A549 (cell line): ENCODE measurements at regions of chr12 and their contacts with region 1.

Region 1: GRCh38 chr12:56359851-56360767 is at the start of gene STAT2:
- DNase-seq: peak; percentile 98 to 100
- ATAC-seq: peak; percentile 98 to 99
- H3K4me3 ChIP-seq: peak within 1 kb of the TSS; percentile 75
- H3K27ac ChIP-seq: peak within 1 kb of the TSS; percentile 76 to 89
- H3K4me1 ChIP-seq: peaks cover 8% of the 10 kb centered on the region
- CTCF ChIP-seq: no peak
- EP300 ChIP-seq: no peak
- POLR2A ChIP-seq: peak; percentile 74
- RAD21 ChIP-seq: peak in 1 of 2 experiments; percentile 1; a peak in 1 of 5 replicates
- polyA plus RNA-seq, gene STAT2: 29.5 and 40.1 TPM in 2 replicates

Region 2: DNA sequence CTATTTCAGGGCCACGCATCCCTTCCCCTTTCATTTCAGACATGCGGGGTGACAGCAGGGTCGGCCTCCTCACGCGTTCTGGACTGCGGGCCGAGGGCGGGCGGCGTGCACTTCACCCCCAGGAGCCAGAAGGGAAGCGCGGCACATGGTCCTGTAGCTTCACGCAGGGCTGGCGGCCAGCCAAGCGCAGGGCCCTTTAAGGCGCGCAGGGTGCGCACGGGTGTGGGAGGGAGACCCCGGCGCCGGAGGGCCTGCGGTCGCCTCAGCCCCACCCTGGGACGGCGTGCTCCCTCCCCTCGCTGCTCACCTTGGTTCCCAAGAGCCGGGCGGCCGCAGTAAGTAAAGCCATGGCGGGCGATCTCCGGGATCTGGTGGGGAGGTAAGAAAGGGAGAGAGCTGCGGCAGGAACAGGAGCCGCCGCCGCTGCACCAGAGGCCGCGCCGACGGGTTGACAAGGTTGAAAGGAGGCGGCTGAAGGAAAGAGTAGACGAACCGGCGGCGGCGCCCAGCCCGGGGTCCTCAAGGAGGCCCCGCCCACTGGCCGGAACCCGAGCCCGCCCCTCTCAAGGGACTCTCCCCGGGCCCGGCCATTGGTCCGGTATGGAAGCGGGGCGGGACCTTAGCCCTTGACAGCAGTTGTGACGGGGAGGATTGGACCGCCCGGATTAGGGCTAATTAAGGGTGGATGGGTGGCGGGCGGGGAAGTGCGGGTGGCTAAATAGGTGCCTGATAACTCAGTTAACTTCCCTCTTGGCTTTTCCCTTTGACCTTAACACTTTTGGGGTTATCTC is 60.1 kb before region 1 on chr12 and contains the start of gene CS:
- CTCF ChIA-PET with region 1: no interaction called
- POLR2A ChIA-PET with region 1: no interaction called
- DNase-seq: peak; percentile 94 to 98
- ATAC-seq: peak; percentile 94 to 97
- H3K4me3 ChIP-seq: peak within 1 kb of the TSS; percentile 69
- H3K27ac ChIP-seq: peak within 1 kb of the TSS; percentile 90 to 91
- H3K4me1 ChIP-seq: peaks cover 23% of the 10 kb centered on the region; the same call in 2 of the 3 replicates
- CTCF ChIP-seq: no peak
- EP300 ChIP-seq: no peak
- POLR2A ChIP-seq: peak; percentile 42
- RAD21 ChIP-seq: no peak
- polyA plus RNA-seq, gene CS: 223 and 263 TPM in 2 replicates

Region 3: DNA sequence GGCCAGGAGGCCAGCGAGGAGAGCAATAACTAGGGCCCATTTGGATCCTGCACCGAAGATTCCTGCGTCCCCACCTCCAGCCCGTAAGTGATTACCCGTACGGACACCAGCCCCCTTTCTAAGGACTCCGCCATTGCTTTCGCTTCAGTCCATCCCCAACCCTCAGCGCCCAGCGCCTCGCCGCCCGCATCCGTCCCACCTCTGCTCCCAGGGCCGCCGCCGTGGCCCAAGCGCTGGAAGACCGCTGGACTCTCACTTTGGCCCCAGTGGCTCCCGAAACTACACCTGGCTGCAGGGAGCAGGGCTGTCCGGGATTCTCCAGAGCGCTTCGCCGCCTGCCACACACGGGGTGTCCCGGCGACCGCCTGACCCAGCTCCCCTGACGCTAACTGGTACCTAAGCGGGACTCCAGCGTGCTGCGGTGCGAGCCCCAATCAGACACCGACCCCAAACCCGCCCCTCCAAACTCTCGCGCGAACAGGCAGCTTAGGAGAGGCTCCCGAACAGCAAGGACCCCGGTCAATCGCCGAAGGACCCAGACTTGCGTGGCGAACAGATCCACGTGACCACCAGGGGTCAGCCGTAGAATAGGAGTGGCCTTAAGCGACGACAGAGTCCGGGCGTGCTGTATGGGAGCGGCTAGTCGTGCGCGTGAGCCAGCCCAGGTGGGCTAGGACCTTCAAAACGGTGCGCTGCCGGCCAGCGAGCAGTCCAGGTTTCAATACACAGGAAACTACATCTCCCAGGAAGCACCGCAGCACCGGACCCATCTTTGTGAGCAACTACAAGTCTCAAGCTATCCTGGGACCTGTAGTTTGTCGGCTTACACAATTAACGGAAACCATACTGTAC is 44.3 kb before region 1 on chr12 and contains the start of gene CNPY2:
- CTCF ChIA-PET with region 1: interaction called, 4 read pairs
- POLR2A ChIA-PET with region 1: interaction called, 20 read pairs
- DNase-seq: peak; percentile 97 to 100
- ATAC-seq: peak; percentile 97
- H3K4me3 ChIP-seq: peak within 1 kb of the TSS; percentile 93
- H3K27ac ChIP-seq: peak within 1 kb of the TSS; percentile 94 to 96
- H3K4me1 ChIP-seq: peaks cover 11% of the 10 kb centered on the region
- CTCF ChIP-seq: no peak
- EP300 ChIP-seq: no peak
- POLR2A ChIP-seq: peak; percentile 88
- RAD21 ChIP-seq: peak; percentile 30 to 54; a peak in 2 of 5 replicates
- polyA plus RNA-seq, gene CNPY2: 218 and 257 TPM in 2 replicates

Region 4: DNA sequence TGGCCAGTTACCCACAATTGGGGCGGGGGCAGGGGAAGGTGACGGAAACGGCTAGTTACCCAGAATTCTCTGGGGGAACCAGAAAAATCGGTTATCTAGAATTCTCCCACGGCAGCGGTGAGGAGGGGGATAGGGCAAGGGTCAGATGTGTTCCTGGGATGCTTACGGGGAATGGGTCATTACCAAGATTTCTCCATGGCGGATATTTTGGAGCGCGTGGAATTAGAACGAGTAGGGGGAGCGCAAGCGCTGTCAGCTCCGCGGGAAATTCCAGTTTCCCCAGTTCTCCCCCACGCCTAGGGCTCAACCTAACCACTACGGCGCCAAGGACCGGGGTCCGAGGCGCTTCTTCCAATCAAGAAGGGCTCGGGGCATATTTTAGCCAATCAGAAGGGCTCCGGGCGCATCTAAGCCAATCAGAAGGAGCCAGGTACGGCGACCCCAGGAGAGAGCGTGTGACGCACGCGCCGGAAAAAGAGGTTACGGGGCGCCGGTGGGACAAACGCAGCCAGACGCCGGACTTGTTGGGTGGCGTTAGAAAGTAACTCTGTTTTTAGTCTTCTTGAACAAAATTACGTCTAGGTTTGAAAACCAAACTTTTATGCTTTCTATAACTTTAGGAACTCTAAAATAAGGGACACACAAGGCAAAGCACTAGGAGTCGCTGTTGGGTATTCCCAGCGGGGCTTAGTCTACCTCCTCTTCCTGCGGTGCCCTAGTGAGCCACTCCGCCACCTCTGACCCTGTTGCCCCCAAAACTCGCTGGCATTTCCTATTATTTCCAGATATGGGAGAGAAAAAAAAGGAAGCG is 26.2 kb before region 1 on chr12 and contains the start of gene PAN2:
- CTCF ChIA-PET with region 1: interaction called, 9 read pairs
- POLR2A ChIA-PET with region 1: interaction called, 21 read pairs
- DNase-seq: peak; percentile 99 to 100
- ATAC-seq: peak; percentile 97 to 100
- H3K4me3 ChIP-seq: peak within 1 kb of the TSS; percentile 54
- H3K27ac ChIP-seq: peak within 1 kb of the TSS; percentile 91 to 92
- H3K4me1 ChIP-seq: peaks cover 15% of the 10 kb centered on the region
- CTCF ChIP-seq: peak; percentile 47
- EP300 ChIP-seq: no peak
- POLR2A ChIP-seq: peak; percentile 61
- RAD21 ChIP-seq: peak; percentile 22 to 25; a peak in 2 of 5 replicates
- polyA plus RNA-seq, gene PAN2: 66.8 and 89.4 TPM in 2 replicates

Region 5: DNA sequence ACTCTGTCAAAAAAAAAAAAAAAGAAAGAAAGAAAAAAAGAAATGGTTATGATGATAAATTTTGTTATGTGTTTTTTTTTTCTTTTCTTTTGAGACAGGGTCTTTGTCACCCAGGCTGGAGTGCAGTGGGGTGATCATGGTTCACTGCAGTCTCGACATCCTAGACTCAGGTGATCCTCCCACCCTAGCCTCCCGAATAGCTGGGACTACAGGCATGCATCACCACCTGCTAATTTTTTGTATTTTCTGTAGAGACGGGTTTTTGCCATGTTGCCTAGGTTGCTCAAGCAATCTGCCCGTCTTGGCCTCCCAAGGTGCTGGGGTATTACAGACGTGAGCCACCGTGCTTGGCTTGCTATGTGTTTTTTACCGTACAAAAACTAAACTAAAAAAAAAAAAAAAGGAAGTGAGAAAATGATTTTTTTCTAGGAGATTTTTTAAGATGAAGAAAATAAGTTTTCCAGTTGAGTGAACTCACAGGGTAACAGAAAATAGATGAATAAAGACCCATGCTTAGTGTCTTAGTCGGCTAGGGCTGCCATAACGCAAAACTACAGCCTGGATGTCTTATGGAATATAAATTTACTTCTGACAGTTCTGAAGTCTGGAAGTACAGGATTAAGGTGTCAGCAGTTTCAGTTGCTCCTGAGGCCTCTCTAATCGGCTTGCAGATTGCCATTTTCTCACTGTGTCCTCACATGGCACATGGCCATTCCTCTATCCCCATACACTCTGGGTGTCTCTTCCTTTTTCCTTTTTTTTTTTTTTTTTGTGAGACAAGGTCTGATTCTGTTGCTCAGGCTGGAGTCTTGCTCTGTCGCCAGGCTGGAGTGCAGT is 15.7 kb after region 1 on chr12:
- CTCF ChIA-PET with region 1: no interaction called
- POLR2A ChIA-PET with region 1: interaction called, 13 read pairs
- DNase-seq: no peak
- ATAC-seq: peak in 1 of 2 experiments; percentile 26; a peak in 2 of 6 replicates
- H3K4me3 ChIP-seq: no peak overlapping the region
- H3K27ac ChIP-seq: no peak overlapping the region
- H3K4me1 ChIP-seq: no peaks in the 10 kb centered on the region
- CTCF ChIP-seq: no peak
- EP300 ChIP-seq: no peak
- POLR2A ChIP-seq: no peak
- RAD21 ChIP-seq: no peak

Region 6: DNA sequence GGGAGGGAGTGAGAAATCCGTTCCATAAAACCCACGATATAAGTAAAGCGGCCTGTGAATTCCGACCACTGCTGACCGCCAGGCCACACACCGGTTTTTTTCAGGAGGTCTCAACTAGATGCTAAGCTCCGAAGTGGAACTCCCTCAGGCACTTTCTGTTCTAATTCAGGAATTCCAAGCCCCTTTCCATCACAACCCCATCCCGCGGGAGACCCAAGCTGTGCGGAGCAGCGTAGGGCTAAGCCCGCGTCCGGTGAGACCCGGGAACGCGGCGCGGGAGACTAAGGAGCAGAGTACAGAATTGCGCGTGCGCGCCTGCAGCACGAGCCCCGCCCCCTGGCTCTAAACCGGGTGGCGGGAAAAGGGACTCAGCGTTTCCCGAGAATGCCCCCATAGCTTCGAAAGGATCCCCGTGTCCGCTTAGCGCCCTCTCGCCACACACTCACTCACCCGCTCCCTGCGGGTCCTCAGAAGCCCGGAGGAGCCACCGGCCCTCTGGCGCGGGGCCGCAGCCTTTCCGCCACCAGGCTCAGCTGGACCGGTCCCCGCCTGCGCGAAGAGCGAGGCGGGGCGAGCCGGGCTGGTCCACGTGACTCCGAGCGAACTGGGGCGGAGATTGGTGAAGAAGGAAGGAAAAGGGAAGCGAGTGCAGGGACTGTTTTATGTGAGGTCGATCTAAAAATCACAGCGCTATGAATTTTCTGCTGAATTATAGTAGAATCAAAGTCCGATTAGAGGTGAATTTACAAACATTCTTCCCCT is 88.9 kb after region 1 on chr12 and contains the start of gene TIMELESS:
- CTCF ChIA-PET with region 1: interaction called, 3 read pairs
- POLR2A ChIA-PET with region 1: interaction called, 14 read pairs
- DNase-seq: peak; percentile 93 to 99
- ATAC-seq: peak; percentile 97 to 98
- H3K4me3 ChIP-seq: peak within 1 kb of the TSS; percentile 59
- H3K27ac ChIP-seq: peak within 1 kb of the TSS; percentile 84 to 92
- H3K4me1 ChIP-seq: peaks cover 9% of the 10 kb centered on the region
- CTCF ChIP-seq: no peak
- EP300 ChIP-seq: no peak
- POLR2A ChIP-seq: peak; percentile 87
- RAD21 ChIP-seq: no peak
- polyA plus RNA-seq, gene TIMELESS: 17.6 and 34.3 TPM in 2 replicates

Region 7: GRCh38 chr12:56490360-56490759 is 130.3 kb after region 1 on chr12:
- CTCF ChIA-PET with region 1: no interaction called
- POLR2A ChIA-PET with region 1: no interaction called
- DNase-seq: no peak
- ATAC-seq: no peak
- H3K4me3 ChIP-seq: no peak overlapping the region
- H3K27ac ChIP-seq: no peak overlapping the region
- H3K4me1 ChIP-seq: peaks cover 23% of the 10 kb centered on the region
- CTCF ChIP-seq: no peak
- EP300 ChIP-seq: no peak
- POLR2A ChIP-seq: no peak
- RAD21 ChIP-seq: no peak